Cardiac septum (tissue), 1 donor: ENCODE measurements at regions of chr15 and their contacts with region 1.

Region 1: GRCh38 chr15:62254137-62254934 is 89.3 kb upstream of the C2CD4B start:
- DNase-seq: no peak

Region 2: DNA sequence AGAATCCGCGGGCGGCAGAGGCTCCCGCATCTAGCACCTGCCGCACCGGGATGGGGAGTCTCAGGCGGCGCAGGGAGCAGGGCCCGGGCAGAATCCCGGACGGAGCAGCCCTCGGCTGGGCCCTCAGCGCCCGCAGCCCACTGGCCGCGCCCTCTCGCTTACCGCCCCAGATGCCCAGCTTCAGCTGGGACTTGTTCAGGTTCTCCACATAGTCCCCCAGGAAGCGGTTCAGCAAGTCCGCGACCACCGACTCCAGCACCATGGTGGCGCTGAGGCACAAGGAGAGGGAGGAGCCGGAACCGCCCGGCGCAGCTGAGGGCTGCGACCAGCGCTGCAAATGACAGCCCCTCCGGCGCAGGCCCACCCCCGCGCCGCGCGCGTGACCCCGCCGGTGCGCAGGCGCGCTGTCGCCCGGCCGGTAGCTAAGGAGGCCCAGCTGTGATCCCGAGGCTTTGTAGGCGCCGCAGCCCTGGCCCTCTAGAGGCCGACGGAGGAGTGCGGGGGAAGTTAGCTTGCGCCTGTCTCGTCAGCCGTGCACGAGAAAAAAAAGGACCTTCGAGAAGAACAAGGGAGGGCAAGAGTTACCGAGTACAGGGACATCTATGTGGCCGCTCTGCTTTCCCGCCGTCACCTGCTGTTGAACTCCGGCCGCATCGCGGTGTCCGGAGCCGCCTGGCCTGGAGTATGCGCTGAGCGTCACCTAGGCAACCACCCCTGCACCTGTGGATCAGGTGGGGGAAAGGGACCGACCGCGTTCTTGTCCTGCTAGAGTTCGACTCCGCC is 194.0 kb before region 1 on chr15 and contains the start of gene VPS13C:
- intact Hi-C with region 1: loop called (anchors 10 kb)
- DNase-seq: peak; percentile 97
- total RNA-seq, gene VPS13C: 35.2 TPM

Region 3: GRCh38 chr15:62125773-62126172 is 128.6 kb before region 1 on chr15:
- intact Hi-C with region 1: loop called (anchors 10 kb)
- DNase-seq: no peak